ENCODE measurements at regions of chr7 and their contacts with region 1.

Region 1: GRCh38 chr7:152436111-152436930 is 518 bp upstream of the KMT2C start:
- DNase-seq: peak; percentile 95 to 96 (median 95)
- ATAC-seq: peak; percentile 83 to 93 (median 90)
- H3K4me3 ChIP-seq: peak overlapping the region; percentile 39 to 98 (median 76)
- H3K27ac ChIP-seq: peak overlapping the region; percentile 92 to 100 (median 97)
- H3K4me1 ChIP-seq: peaks cover 0 to 30% (median 24%) of the 10 kb centered on the region in 12 donors
- H3K27me3 ChIP-seq: no peaks in the 10 kb centered on the region
- CTCF ChIP-seq: no peak
- POLR2A ChIP-seq: peak in 1 of 2 donors; percentile 56

Region 2: GRCh38 chr7:152336754-152337368 is 99.5 kb before region 1 on chr7:
- intact Hi-C with region 1: loop called in 5 of 10 experiments (anchors 5 to 10 kb)
- DNase-seq: no peak
- ATAC-seq: peak in 3 of 4 donors; percentile 64 to 71 (median 70)
- H3K4me3 ChIP-seq: peak overlapping the region in 2 of 12 donors; percentile 38 to 44
- H3K27ac ChIP-seq: peak overlapping the region in 2 of 12 donors; percentile 41 to 61
- H3K4me1 ChIP-seq: peaks cover 4 to 69% (median 46%) of the 10 kb centered on the region in 12 donors
- H3K27me3 ChIP-seq: no peaks in the 10 kb centered on the region
- CTCF ChIP-seq: peak in 11 of 12 donors; percentile 37 to 58 (median 47)
- POLR2A ChIP-seq: no peak